ENCODE measurements at regions of chr20 and their contacts with region 1.

Region 1: DNA sequence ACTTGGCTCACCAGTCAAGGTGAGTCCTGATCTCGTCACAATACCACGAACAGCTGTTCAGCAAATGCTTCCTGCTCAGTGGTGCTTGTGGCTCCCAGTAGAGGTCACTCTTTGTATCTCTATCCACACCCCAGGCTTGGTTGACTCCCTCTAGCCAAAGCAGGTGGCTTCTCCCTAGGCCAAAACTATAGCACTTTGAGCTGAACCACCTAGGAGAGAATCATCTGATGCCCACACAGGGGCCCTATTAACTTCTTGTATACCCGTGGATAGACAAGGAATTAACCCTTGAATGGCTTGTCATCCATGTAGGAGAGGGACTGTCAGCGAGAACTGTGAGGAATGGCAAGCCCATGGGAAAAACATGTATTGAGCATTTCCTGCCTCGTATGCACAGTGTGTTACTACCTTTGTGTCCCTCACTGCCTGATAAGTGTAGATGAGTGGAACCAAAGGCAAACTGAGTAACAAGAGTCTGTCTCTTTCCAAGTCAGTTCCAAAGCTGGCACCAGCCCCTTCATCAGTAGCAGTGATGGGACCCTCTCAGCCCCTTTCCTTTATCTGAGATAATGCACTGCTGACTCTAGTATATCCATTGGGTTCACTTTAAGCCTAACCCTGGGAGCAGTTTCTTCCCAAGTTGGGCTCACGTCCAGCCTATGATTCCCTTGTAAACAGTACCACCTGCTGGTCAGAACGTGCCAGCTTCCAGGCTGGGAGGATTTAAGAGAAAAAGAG is 42.5 kb downstream of the EIF2S2 start:
- DNase-seq: peak; percentile 80
- H3K4me3 ChIP-seq: peak overlapping the region in 1 of 2 experiments; percentile 42; a peak in 1 of 4 replicates
- H3K27ac ChIP-seq: peak overlapping the region in 1 of 2 experiments; percentile 58; a peak in 2 of 4 replicates
- H3K4me1 ChIP-seq: peaks cover 4 to 45% of the 10 kb centered on the region in 2 experiments; a peak in 3 of 4 replicates
- H3K27me3 ChIP-seq: no peaks in the 10 kb centered on the region
- CTCF ChIP-seq: peak; percentile 92
- EP300 ChIP-seq: no peak
- RAD21 ChIP-seq: peak; percentile 98

Region 2: DNA sequence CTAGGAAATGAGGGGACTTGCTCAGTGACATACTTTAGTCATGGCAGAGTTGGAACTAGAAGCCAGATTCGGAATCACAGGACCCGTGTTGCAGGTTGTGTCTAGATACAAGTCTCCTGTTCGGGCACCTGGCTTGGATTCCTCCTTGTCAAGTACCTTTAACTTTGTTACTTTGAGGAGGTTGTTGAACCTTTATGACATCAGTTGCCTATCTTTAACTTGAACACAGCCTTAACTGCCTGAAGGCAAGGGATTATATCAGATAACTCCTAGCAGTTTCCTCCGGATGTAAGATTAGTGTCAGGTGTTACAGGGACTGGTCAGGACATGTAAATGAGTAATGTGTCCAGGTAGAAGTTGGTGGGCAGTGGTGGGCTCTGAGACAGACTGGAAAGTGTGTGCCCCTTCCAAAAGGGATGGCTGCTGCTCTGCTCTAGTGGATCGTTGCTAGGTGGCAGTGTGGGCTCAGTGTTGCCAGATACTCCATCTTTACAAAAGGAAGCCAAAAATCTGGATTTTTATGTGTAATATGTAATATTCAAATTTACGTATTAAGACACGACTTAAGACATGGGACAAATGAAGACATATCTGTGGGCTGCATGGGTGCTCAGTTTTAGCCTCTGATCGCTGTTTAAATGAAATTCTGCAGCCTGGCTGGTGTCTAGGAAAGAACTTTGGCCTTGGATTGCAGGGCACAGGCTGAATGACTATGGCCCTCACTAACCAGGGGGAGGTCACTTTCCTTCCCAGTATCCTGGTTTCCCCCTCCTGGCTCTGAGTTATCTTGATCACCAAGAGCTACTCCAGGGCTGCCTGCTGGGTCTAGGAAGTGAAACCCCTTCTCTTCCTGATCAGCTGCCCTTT is 231.3 kb before region 1 on chr20:
- CTCF ChIA-PET with region 1: interaction called, 25 read pairs
- POLR2A ChIA-PET with region 1: no interaction called
- DNase-seq: no peak
- H3K4me3 ChIP-seq: no peak overlapping the region
- H3K27ac ChIP-seq: peak overlapping the region in 1 of 2 experiments; percentile 93; a peak in 2 of 4 replicates
- H3K4me1 ChIP-seq: peaks cover 13 to 64% of the 10 kb centered on the region in 2 experiments
- H3K27me3 ChIP-seq: no peaks in the 10 kb centered on the region
- CTCF ChIP-seq: peak; percentile 24; the same call in 1 of the 2 replicates
- EP300 ChIP-seq: no peak
- RAD21 ChIP-seq: peak; percentile 66

Region 3: GRCh38 chr20:33933469-33933909 is 136.0 kb before region 1 on chr20:
- CTCF ChIA-PET with region 1: interaction called, 10 read pairs
- POLR2A ChIA-PET with region 1: no interaction called
- DNase-seq: peak; percentile 52
- H3K4me3 ChIP-seq: no peak overlapping the region
- H3K27ac ChIP-seq: no peak overlapping the region
- H3K4me1 ChIP-seq: no peaks in the 10 kb centered on the region; a peak in 1 of 4 replicates
- H3K27me3 ChIP-seq: no peaks in the 10 kb centered on the region
- CTCF ChIP-seq: peak; percentile 55
- EP300 ChIP-seq: no peak
- RAD21 ChIP-seq: peak; percentile 77

Region 4: GRCh38 chr20:34022154-34022838 is 47.2 kb before region 1 on chr20:
- CTCF ChIA-PET with region 1: interaction called, 11 read pairs
- POLR2A ChIA-PET with region 1: no interaction called
- DNase-seq: peak; percentile 66
- H3K4me3 ChIP-seq: no peak overlapping the region
- H3K27ac ChIP-seq: no peak overlapping the region
- H3K4me1 ChIP-seq: peaks cover 9 to 45% of the 10 kb centered on the region in 2 experiments; a peak in 3 of 4 replicates
- H3K27me3 ChIP-seq: no peaks in the 10 kb centered on the region
- CTCF ChIP-seq: peak; percentile 56
- EP300 ChIP-seq: no peak
- RAD21 ChIP-seq: peak; percentile 73

Region 5: DNA sequence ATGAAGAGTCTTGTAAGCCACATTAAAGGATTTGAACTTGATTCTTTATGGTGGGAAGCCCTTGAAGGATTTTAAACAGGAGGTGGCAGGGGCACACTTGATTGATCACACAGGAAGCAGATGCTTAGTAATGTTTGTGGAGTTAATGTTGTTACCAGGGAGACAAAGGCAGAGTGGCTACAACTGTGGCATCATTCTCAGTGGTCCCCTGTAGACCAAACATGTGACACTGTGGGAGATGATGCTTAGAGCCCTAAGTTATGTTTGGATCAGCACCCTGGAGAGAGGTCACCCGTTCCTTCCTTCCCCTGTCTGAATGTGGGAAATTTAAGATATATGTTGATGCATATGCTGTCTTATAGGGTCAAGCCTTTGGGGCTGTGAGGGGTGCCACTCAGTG is 10.7 kb before region 1 on chr20:
- CTCF ChIA-PET with region 1: interaction called, 12 read pairs
- POLR2A ChIA-PET with region 1: no interaction called
- DNase-seq: no peak
- H3K4me3 ChIP-seq: no peak overlapping the region
- H3K27ac ChIP-seq: peak overlapping the region in 1 of 2 experiments; percentile 86; a peak in 1 of 4 replicates
- H3K4me1 ChIP-seq: peaks cover 0 to 49% of the 10 kb centered on the region in 2 experiments; a peak in 2 of 4 replicates
- H3K27me3 ChIP-seq: no peaks in the 10 kb centered on the region
- CTCF ChIP-seq: no peak
- EP300 ChIP-seq: no peak
- RAD21 ChIP-seq: no peak

Region 6: GRCh38 chr20:34083137-34083536 is 13.6 kb after region 1 on chr20:
- CTCF ChIA-PET with region 1: interaction called, 29 read pairs
- POLR2A ChIA-PET with region 1: no interaction called
- DNase-seq: no peak
- H3K4me3 ChIP-seq: no peak overlapping the region
- H3K27ac ChIP-seq: no peak overlapping the region
- H3K4me1 ChIP-seq: peaks cover 8% of the 10 kb centered on the region in 2 experiments; a peak in 1 of 4 replicates
- H3K27me3 ChIP-seq: no peaks in the 10 kb centered on the region
- CTCF ChIP-seq: no peak
- EP300 ChIP-seq: no peak
- RAD21 ChIP-seq: no peak